Right cardiac atrium (tissue), 5 donors: ENCODE measurements at regions of chr10 and their contacts with region 1.

Region 1: DNA sequence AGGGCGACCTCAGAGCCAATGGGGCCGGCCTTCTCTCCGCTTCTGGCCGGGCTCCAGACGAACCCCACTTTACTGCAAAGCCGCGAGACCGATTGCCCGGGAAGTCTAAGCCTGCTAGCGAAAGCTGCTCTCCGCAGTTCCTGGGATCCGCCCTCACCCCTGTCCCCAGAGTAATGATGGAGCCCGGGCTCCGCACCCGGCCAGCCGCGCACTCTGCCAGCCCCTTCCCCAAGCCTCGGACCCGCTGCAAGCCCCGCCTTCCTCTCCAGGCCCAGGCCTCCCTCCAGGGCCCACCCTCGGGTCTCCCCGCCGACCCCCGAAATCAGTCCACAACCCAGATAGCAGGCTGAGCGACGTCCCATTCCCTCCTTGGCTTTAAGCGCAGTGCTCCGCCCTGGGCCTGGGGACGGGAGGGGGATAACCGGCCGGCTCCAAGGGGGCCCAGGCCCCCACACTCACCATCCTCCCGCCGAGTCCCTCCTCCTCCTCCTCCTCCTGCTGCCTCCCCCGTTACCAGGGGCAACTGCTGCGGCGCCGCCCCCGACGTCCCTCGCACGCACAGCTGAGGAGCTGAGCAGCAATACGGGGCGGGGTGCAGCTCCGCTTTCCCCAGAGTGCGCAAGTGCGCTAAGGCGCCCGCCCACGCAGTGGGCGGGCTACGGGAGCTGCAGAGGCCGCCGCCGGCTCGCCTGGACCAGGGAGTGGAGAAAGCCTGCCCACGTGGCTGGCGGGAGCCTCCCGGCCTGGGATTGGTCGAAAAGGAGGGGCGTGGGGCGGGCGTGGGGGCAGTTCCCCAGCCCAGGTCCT is at the start of gene ARL3:
- DNase-seq: peak; percentile 99 to 100 (median 99)
- ATAC-seq: peak; percentile 98 to 99
- H3K4me3 ChIP-seq: peak within 1 kb of the TSS; percentile 82
- H3K27ac ChIP-seq: peak within 1 kb of the TSS; percentile 86
- H3K4me1 ChIP-seq: peaks cover 2% of the 10 kb centered on the region
- H3K27me3 ChIP-seq: no peaks in the 10 kb centered on the region
- total RNA-seq, gene ARL3: 13.0 to 18.3 (median 14.9) TPM

Region 2: DNA sequence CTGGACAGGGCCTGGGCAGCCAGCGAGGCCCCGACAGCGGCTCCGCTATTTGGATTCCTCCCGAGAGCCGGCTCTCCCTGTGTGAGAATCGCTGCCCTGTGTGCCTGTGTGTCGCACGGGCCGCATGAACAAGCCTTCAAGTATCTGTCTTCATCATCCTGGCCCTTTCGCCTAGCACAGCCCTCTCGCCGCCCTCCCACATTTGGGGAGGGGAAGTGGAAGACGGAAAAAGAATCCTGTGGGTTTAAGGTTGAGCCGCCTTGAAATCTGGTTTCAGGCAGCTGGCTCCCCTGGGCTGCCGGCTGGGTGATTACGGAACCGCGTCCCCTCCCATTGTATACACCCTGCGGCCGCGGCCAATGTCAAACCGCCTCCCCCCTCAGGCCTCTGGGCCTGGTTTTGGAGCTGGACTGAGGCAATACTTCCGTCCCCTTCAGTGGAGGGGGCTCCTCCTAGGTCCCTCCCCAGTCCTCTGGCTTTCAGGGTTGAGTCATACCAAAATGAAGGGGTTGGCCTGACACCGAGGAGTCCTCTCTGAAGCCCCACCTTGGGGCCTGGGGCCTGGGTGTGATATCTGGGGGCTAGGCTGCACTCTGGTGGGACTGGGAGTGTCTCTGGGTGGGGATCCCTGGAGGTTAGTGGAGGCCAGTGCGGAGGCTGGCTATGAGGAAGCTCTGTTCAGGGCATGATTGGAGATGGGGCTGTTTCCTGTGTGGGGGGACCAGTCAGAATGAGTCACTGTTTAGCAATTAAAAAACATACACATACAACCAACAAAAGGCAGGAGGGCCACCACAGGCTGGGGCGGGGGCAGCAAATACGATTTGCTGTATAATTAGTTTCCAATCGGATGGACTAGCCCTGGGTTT is 68.0 kb before region 1 on chr10:
- intact Hi-C with region 1: loop called in 1 of 4 experiments (anchors 5 kb)
- DNase-seq: peak; percentile 94 to 96 (median 95)
- ATAC-seq: peak; percentile 61 to 73
- H3K4me3 ChIP-seq: peak overlapping the region; percentile 93
- H3K27ac ChIP-seq: peak overlapping the region; percentile 98
- H3K4me1 ChIP-seq: peaks cover 32% of the 10 kb centered on the region
- H3K27me3 ChIP-seq: no peaks in the 10 kb centered on the region

Region 3: GRCh38 chr10:102660888-102661657 is 52.9 kb before region 1 on chr10:
- intact Hi-C with region 1: no loop called
- DNase-seq: peak; percentile 78 to 89 (median 85)
- ATAC-seq: peak; percentile 57 to 78
- H3K4me3 ChIP-seq: no peak overlapping the region
- H3K27ac ChIP-seq: no peak overlapping the region
- H3K4me1 ChIP-seq: peaks cover 10% of the 10 kb centered on the region
- H3K27me3 ChIP-seq: no peaks in the 10 kb centered on the region

Region 4: GRCh38 chr10:102673819-102674511 is 40.1 kb before region 1 on chr10:
- intact Hi-C with region 1: loop called in 1 of 4 experiments (anchors 5 kb)
- DNase-seq: peak; percentile 76 to 88 (median 85)
- ATAC-seq: peak; percentile 77 to 83
- H3K4me3 ChIP-seq: peak overlapping the region; percentile 30
- H3K27ac ChIP-seq: peak overlapping the region; percentile 84
- H3K4me1 ChIP-seq: peaks cover 20% of the 10 kb centered on the region
- H3K27me3 ChIP-seq: no peaks in the 10 kb centered on the region